AG04449 (cell line): ENCODE measurements at regions of chr12 and their contacts with region 1.

Region 1: DNA sequence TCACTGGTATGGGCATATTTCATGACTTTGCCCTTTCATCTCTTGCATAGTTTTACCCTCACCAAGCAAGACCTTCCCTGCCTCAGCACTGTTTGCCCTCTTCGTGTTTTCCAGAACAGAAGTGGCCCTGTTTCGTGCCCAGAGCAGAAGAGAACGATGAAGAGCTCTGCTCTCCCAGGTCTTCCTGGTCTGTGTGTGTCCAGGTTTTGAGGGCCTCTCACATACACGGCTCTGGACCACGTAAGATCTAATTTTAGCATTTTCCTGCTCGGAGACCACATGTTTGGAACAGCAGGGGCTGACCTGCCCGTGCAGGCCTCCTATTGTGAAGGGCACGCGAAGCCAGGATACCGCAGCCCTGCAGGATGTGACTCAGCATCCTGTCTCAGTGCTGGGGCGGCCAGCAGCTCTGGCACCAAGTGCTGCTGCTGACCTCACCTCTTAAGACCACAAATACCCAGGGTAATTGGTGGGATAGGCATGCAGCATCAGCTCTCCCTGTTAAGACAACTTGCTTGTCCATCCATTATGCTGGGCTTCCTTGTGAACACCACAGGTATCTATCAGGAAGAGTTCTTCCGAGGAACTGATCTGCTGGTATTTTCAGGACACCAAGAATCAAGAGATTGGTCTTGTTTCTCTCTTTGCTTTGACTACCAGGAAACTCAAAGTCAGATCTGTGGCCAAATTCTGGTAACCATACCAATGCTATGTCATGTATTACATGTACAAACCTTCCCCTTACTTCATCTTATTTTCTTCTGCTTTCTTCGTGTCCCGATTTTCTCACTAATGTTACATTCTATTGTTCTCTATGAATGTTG is 19.0 kb downstream of the SSH1 start:
- DNase-seq: peak; percentile 100
- H3K4me3 ChIP-seq: no peak overlapping the region
- CTCF ChIP-seq: no peak

Region 2: DNA sequence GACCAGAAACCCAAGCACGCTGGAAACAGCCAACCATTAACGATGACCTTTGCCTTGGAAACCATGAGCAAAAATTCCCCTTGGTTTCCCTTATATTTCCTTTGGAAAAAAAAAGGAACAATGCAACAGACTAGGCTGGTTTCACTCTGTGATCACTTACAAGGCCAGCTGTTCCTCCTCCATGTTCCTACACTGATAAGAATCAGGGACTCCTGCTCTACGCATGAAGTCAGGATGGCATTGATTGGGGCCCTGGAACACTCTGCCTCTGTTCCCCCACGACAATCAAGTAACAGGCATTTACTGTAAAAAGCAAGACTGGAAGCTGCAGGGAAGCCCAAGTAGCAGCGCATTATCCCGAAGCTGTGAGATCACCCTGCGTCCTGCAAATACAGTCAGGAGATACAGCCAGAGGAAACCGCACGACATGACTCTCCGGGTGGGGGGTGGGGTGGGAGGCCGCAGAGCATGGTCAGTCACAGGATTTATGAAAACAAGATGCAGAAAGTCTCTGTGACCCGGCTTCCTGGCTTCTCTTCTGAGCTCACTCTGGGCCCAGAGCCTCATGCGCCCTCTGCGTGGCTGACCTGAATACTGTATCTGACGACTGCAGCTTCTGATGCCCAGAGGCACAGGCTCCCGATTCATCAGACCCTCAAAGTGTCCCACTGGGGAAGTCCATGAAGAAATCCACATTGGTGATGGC is 12.2 kb before region 1 on chr12:
- CTCF ChIA-PET with region 1: interaction called, 8 read pairs
- POLR2A ChIA-PET with region 1: interaction called, 23 read pairs
- DNase-seq: peak; percentile 91
- H3K4me3 ChIP-seq: peak overlapping the region; percentile 38
- CTCF ChIP-seq: peak; percentile 28

Region 3: GRCh38 chr12:108856428-108857157 is 18.2 kb after region 1 on chr12:
- CTCF ChIA-PET with region 1: interaction called, 10 read pairs
- POLR2A ChIA-PET with region 1: interaction called, 47 read pairs
- DNase-seq: no peak
- H3K4me3 ChIP-seq: peak overlapping the region; percentile 90
- CTCF ChIP-seq: no peak

Region 4: DNA sequence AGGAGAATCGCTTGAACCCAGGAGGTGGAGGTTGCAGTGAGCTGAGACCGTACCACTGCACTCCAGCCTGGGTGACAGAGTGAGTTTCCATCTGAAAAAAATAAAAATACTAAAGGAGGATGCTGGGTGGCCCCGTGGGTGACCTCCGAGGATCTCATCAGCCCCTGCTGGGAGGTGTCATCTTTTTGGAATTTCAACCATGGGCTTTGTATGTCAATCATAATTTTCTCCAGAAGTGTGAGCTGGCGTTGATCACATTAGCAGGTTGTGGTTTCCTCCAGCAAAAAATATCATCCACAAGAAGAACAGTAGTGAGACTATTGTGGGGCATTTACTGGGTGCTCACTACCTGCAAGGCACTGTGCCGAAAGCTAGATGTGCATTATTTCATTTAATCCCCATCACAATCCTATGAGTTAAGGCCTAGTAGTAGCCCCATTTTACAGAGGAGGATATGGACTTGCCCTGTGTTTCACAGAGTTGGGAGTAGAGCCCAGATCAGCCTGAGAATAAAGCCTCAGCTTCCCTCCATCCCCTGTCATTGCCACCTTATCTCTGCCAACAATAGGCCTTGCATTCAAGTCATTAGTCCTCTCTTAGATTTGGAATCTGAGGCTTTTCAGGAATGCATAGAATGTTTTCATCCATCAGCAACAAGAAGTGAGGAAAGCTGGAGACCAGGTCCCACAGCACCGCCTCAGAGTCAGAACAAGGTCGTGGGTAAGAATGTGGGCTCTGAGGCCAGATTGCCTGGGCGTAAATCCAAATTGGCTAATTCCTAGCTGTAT is 142.6 kb after region 1 on chr12:
- CTCF ChIA-PET with region 1: no interaction called
- POLR2A ChIA-PET with region 1: no interaction called
- DNase-seq: peak; percentile 33
- H3K4me3 ChIP-seq: no peak overlapping the region
- CTCF ChIP-seq: no peak